Ascending aorta (tissue), 2 donors: ENCODE measurements at regions of chr2 and their contacts with region 1.

Region 1: GRCh38 chr2:45009303-45009927 is at the start of gene SIX2:
- DNase-seq: peak; percentile 87 to 97
- H3K4me3 ChIP-seq: peak within 1 kb of the TSS; percentile 66 to 75
- H3K27ac ChIP-seq: peak within 1 kb of the TSS; percentile 91 to 96
- H3K4me1 ChIP-seq: peaks cover 14 to 30% of the 10 kb centered on the region in 2 donors
- H3K27me3 ChIP-seq: no peaks in the 10 kb centered on the region
- CTCF ChIP-seq: no peak
- total RNA-seq, gene SIX2: 22.2 TPM

Region 2: GRCh38 chr2:44167940-44168680 is 841.3 kb before region 1 on chr2:
- intact Hi-C with region 1: loop called (anchors 5 kb)
- DNase-seq: peak; percentile 99 to 100
- H3K4me3 ChIP-seq: peak overlapping the region; percentile 57 to 76
- H3K27ac ChIP-seq: peak overlapping the region; percentile 95 to 98
- H3K4me1 ChIP-seq: peaks cover 0 to 16% of the 10 kb centered on the region in 2 donors
- H3K27me3 ChIP-seq: no peaks in the 10 kb centered on the region
- CTCF ChIP-seq: no peak

Region 3: DNA sequence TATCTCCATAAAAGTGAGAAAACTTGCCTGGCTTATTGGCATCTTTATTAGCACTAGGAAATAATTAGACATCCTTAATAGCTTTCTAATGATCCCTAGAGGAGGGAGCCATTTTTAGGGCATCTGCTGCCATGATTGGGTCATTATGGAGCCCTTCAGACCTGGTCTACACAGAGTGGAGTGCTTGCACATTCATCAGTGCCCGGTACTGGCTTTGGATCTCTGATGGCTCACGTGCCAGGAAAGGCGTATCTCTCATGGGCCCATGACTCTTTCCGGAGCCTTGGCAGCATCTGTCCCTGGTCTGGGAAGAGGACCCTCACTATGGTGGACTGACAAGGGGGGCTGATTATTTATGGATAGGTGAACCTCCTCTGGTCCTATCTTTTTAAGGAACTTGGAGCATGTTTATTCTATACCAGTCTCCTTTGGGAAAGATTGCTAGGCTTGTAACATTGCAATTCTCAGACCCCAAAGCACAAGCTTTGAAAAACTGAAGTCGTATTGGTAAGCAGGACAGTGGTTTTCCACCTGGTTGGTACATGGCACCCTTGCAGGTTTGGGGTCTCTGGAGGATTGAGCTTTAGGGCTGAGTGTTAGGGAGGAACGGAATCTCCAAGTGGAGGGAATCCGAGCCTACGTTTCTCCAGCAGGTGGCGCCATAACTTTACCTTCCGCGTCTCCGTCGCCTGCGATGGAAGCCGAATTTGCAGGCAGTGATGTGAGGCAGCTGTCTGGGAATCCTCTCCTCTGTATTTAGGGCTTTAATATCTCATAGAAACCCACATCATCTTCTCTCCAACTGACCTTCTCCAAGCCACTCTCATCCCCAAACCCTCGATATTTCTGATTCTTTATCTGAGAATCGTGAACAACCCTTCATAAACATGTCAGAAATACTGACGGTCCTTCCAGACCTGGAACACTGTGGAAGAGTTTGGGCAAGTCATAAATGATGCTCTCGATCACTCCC is 28.0 kb before region 1 on chr2:
- intact Hi-C with region 1: loop called (anchors 2 kb)
- DNase-seq: peak in 1 of 2 donors; percentile 82
- H3K4me3 ChIP-seq: no peak overlapping the region
- H3K27ac ChIP-seq: no peak overlapping the region
- H3K4me1 ChIP-seq: peaks cover 0 to 4% of the 10 kb centered on the region in 2 donors
- H3K27me3 ChIP-seq: no peaks in the 10 kb centered on the region
- CTCF ChIP-seq: peak; percentile 66 to 85 (median 66)

Region 4: DNA sequence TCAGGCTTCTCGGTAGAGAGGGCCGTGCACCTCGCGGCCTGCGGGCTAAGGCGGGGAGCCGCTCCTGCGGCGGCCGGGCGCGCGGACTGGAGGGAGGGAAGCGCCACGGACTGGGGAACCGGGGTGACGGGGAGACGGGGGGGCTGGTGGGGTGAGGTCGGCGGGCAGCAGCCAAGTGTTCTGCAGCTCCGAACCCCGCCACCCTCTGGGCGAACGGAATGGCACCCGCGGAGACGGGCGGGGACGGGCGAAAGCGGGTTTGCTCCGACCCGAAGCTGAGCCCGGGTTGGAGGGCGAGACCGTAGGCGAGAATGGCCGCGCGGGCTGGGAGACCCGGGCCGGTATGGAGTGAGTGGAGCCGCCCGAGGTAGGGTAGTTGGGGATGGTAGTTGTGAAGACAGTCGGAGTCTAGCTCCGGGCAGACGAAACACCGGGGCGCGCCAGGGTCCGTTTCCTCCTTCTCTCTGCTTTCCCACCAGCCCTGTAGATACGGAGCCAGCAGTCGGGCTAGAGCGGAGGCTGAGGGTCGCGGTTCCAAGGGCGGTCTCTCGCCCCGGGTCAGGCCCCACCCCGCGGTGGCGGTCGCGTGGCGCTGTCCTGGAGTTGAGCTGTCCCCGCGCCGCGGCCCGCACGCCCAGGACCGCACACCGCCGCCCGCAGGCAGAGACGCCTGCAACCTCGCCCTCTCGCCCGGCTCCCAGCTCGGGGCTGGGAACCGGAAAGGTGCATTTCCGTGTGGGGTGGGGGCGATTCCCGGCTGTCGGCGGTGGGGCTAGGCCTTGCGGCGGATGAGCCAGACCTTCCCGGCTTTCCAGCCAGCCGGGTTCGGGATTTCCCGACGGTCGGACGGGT is 160.2 kb after region 1 on chr2:
- intact Hi-C with region 1: loop called (anchors 1 kb)
- DNase-seq: no peak
- H3K4me3 ChIP-seq: peak overlapping the region; percentile 70 to 71
- H3K27ac ChIP-seq: peak overlapping the region; percentile 57 to 65
- H3K4me1 ChIP-seq: peaks cover 0 to 2% of the 10 kb centered on the region in 2 donors
- H3K27me3 ChIP-seq: no peaks in the 10 kb centered on the region
- CTCF ChIP-seq: peak in 1 of 3 experiments; percentile 13

Region 5: GRCh38 chr2:45242161-45242741 is 232.8 kb after region 1 on chr2:
- intact Hi-C with region 1: loop called (anchors 5 kb)
- DNase-seq: peak in 1 of 2 donors; percentile 75
- H3K4me3 ChIP-seq: no peak overlapping the region
- H3K27ac ChIP-seq: peak overlapping the region; percentile 70 to 77
- H3K4me1 ChIP-seq: peaks cover 7 to 16% of the 10 kb centered on the region in 2 donors
- H3K27me3 ChIP-seq: no peaks in the 10 kb centered on the region
- CTCF ChIP-seq: no peak

Region 6: GRCh38 chr2:45283764-45284620 is 274.6 kb after region 1 on chr2:
- intact Hi-C with region 1: loop called (anchors 10 kb)
- DNase-seq: peak; percentile 50 to 83
- H3K4me3 ChIP-seq: no peak overlapping the region
- H3K27ac ChIP-seq: peak overlapping the region; percentile 64 to 84
- H3K4me1 ChIP-seq: peaks cover 10 to 16% of the 10 kb centered on the region in 2 donors
- H3K27me3 ChIP-seq: no peaks in the 10 kb centered on the region
- CTCF ChIP-seq: no peak

Region 7: GRCh38 chr2:45432406-45432805 is 423.0 kb after region 1 on chr2:
- intact Hi-C with region 1: loop called (anchors 5 kb)
- DNase-seq: peak in 1 of 2 donors; percentile 72
- H3K4me3 ChIP-seq: no peak overlapping the region
- H3K27ac ChIP-seq: peak overlapping the region; percentile 13 to 19
- H3K4me1 ChIP-seq: peaks cover 0 to 11% of the 10 kb centered on the region in 2 donors
- H3K27me3 ChIP-seq: no peaks in the 10 kb centered on the region
- CTCF ChIP-seq: peak in 1 of 3 experiments; percentile 29